Left ventricle myocardium superior (tissue), 1 donor: ENCODE measurements at regions of chr9 and their contacts with region 1.

Region 1: GRCh38 chr9:29100762-29101161 is 1527.5 kb upstream of the C9orf72 start:
- DNase-seq: no peak
- ATAC-seq: no peak

Region 2: DNA sequence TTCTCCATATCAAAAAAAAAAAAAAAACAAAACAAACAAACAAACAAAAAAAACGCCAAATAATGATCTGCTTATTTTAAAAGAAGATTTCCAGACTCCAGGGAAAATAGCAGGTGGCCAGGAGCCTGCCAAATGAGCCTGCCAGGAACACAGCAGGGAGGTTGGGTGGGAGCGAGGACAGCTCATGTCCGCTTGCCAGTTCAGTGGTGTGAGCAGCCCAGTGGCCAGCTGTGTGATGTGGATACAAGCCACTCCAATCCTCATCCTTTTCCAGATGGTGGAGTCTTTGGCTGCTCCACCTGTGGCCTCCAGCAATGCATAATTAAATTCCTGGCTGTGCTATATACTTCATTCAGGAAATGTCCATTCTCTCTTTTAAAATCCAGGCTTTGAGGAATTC is 502.4 kb before region 1 on chr9:
- intact Hi-C with region 1: no loop called
- DNase-seq: no peak
- ATAC-seq: no peak

Region 3: DNA sequence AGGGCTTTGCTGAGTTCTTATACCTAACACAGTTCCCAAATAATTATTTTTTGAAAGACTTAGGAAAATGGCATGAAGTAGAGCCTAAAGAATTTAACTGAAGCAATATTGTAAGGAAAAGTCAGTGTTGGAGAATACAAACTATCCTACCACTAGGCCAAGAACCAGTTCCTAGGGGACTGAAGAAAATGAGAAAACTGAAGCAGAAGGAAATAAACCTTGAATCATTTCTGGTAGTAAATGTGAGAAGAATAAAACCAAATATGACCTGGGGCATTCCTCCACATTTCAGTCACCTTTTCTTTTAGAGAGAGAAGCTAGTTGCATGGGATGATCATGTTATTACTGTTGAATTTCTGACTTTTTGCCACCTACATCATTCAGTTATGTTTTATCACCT is 133.5 kb before region 1 on chr9:
- intact Hi-C with region 1: loop called (anchors 10 kb)
- DNase-seq: no peak
- ATAC-seq: no peak

Region 4: GRCh38 chr9:29456940-29457339 is 356.2 kb after region 1 on chr9:
- intact Hi-C with region 1: no loop called
- DNase-seq: no peak
- ATAC-seq: no peak